GM12878 (cell line): ENCODE measurements at regions of chr9 and their contacts with region 1.

Region 1: DNA sequence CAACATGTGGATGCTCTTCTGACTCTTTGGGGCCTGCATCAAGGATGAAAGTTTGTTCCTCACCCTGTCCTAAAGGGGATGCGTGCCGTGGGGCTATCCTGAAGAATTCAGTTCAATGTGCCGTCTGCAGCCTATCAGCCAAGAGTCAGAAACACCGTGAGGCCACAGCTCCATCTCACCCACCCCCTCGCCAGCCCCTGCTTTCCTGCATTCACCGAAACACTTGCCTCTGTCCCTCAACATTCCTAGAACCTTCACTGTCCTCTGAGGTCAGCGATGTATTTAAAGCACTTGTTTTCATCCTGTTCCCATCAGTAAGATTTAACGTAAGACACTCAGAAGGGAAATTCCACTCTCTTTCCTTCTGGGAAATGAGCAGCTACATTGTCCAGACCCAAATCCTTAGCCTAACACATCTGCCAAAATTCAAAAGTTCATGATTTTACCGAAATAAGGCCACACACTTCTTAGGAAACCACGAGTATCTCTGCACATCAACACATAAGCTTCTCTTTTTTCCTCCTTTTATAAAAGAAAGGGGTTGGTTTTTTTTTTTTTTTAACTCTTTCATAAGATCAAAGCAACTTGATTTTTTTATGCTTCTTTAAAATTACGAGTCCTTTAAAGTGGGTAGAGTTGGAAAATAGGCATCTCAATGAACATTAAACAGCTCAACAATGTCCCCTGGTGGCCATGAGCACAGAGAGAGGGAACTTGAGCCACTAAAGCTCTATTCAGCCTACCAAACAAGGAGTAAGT is 100.7 kb downstream of the SUSD1 start:
- DNase-seq: peak; percentile 84
- ATAC-seq: peak; percentile 72
- H3K4me3 ChIP-seq: peak overlapping the region; percentile 4; the same call in 1 of the 2 replicates
- H3K27ac ChIP-seq: peak overlapping the region; percentile 73
- H3K4me1 ChIP-seq: peaks cover 66% of the 10 kb centered on the region
- H3K27me3 ChIP-seq: no peaks in the 10 kb centered on the region
- CTCF ChIP-seq: peak; percentile 91 to 97 (median 97)
- EP300 ChIP-seq: no peak
- POLR2A ChIP-seq: no peak
- RAD21 ChIP-seq: peak; percentile 99

Region 2: GRCh38 chr9:111896353-111896958 is 178.0 kb before region 1 on chr9 and contains the start of gene UGCG:
- CTCF ChIA-PET with region 1: interaction called, 10 read pairs
- POLR2A ChIA-PET with region 1: interaction called, 8 read pairs
- RAD21 ChIA-PET with region 1: interaction called, 24 read pairs
- SMC1A ChIA-PET with region 1: interaction called, 23 read pairs
- in situ Hi-C with region 1: no loop called
- intact Hi-C with region 1: loop called (anchors 2 kb)
- DNase-seq: no peak
- ATAC-seq: peak; percentile 79
- H3K4me3 ChIP-seq: peak within 1 kb of the TSS; percentile 80
- H3K27ac ChIP-seq: peak within 1 kb of the TSS; percentile 93
- H3K4me1 ChIP-seq: no peaks in the 10 kb centered on the region; the same call in 1 of the 2 replicates
- H3K27me3 ChIP-seq: no peaks in the 10 kb centered on the region
- CTCF ChIP-seq: no peak
- EP300 ChIP-seq: 0 out of 4 replicates have a peak, but pooled peaks of 1 of the 2 experiments have one; percentile 14
- POLR2A ChIP-seq: peak; percentile 93
- RAD21 ChIP-seq: 0 out of 2 replicates have a peak, but pooled peaks have one; percentile 2
- polyA plus RNA-seq, gene UGCG: 48.0 to 62.1 TPM

Region 3: GRCh38 chr9:111937781-111938426 is 136.5 kb before region 1 on chr9:
- CTCF ChIA-PET with region 1: interaction called, 10 read pairs
- POLR2A ChIA-PET with region 1: interaction called, 3 read pairs
- RAD21 ChIA-PET with region 1: interaction called, 26 read pairs
- SMC1A ChIA-PET with region 1: interaction called, 9 read pairs
- in situ Hi-C with region 1: no loop called
- intact Hi-C with region 1: no loop called
- DNase-seq: peak; percentile 74
- ATAC-seq: peak; percentile 90
- H3K4me3 ChIP-seq: no peak overlapping the region
- H3K27ac ChIP-seq: peak overlapping the region; percentile 80
- H3K4me1 ChIP-seq: peaks cover 21% of the 10 kb centered on the region
- H3K27me3 ChIP-seq: no peaks in the 10 kb centered on the region
- CTCF ChIP-seq: no peak
- EP300 ChIP-seq: peak; percentile 68 to 77; a peak in 2 of 4 replicates
- POLR2A ChIP-seq: no peak; the same call in none of the 2 replicates
- RAD21 ChIP-seq: no peak

Region 4: DNA sequence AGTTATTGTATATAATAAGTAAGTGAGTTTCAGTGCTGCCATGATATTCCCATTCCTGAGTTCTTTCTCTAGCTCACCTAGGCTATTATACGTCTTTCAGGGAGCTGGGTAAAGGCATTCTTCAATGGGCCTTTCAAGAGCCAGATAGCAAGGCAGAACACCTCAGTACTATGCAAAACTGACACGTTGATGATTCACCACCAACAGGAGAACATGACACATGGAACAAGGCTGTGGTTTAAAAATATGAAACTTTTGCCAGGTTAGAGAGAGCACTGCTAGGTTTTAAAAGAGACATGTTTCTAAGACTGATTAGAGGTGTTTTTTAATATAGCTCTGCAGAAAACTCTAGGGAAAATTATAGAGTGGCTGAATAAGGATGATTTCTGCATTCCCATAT is 81.9 kb before region 1 on chr9:
- CTCF ChIA-PET with region 1: interaction called, 22 read pairs
- POLR2A ChIA-PET with region 1: interaction called, 9 read pairs
- RAD21 ChIA-PET with region 1: interaction called, 55 read pairs
- SMC1A ChIA-PET with region 1: interaction called, 129 read pairs
- in situ Hi-C with region 1: no loop called
- intact Hi-C with region 1: no loop called
- DNase-seq: peak; percentile 77
- ATAC-seq: peak; percentile 86
- H3K4me3 ChIP-seq: no peak overlapping the region
- H3K27ac ChIP-seq: peak overlapping the region; percentile 89
- H3K4me1 ChIP-seq: peaks cover 54% of the 10 kb centered on the region
- H3K27me3 ChIP-seq: no peaks in the 10 kb centered on the region
- CTCF ChIP-seq: no peak
- EP300 ChIP-seq: peak; percentile 43 to 69; a peak in 3 of 4 replicates
- POLR2A ChIP-seq: no peak
- RAD21 ChIP-seq: no peak

Region 5: DNA sequence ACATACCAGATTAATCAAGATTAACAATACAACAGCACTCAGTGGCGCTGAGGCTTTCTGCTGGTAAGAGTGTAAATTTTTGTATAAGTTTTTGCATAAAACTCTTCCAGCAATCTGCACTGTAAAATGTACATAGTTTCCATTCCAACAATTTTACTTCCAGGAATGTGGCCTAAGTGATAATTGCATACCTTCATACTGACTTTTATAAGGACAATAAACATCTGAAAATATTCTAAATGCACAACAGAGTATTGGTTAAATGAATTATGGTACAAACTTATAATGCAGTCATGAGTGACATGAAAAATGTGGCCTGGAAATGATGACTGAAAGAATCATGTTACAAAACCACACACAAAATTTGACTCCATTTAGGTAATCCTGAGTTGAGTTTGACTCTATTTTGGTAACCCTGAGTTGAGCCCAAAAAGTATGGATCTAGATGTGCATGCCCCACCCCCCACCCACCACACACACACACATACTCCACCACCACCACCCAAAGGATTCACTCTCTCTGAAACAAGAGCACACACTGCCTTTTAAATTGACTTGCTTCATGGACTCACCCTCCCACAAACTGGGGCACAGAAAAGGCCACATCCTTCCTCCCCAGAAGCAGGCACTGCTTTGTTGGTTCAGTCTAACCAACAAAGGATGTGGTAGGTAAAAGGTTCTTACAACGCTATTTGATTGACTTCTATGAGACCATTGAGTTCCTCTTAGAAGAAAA is 37.0 kb before region 1 on chr9:
- CTCF ChIA-PET with region 1: interaction called, 41 read pairs
- POLR2A ChIA-PET with region 1: interaction called, 42 read pairs
- RAD21 ChIA-PET with region 1: interaction called, 339 read pairs
- SMC1A ChIA-PET with region 1: interaction called, 301 read pairs
- in situ Hi-C with region 1: no loop called
- intact Hi-C with region 1: no loop called
- DNase-seq: peak; percentile 97
- ATAC-seq: peak; percentile 71
- H3K4me3 ChIP-seq: no peak overlapping the region
- H3K27ac ChIP-seq: peak overlapping the region; percentile 97
- H3K4me1 ChIP-seq: peaks cover 63% of the 10 kb centered on the region
- H3K27me3 ChIP-seq: no peaks in the 10 kb centered on the region
- CTCF ChIP-seq: no peak
- EP300 ChIP-seq: peak; percentile 74 to 78; a peak in 3 of 4 replicates
- POLR2A ChIP-seq: peak; percentile 69
- RAD21 ChIP-seq: peak; percentile 44; the same call in 1 of the 2 replicates

Region 6: GRCh38 chr9:112097712-112098688 is 23.6 kb after region 1 on chr9:
- CTCF ChIA-PET with region 1: interaction called, 24 read pairs
- POLR2A ChIA-PET with region 1: no interaction called
- RAD21 ChIA-PET with region 1: interaction called, 3 read pairs
- SMC1A ChIA-PET with region 1: interaction called, 9 read pairs
- in situ Hi-C with region 1: no loop called
- intact Hi-C with region 1: no loop called
- DNase-seq: no peak
- ATAC-seq: peak; percentile 93
- H3K4me3 ChIP-seq: no peak overlapping the region
- H3K27ac ChIP-seq: no peak overlapping the region
- H3K4me1 ChIP-seq: peaks cover 5% of the 10 kb centered on the region; the same call in 1 of the 2 replicates
- H3K27me3 ChIP-seq: no peaks in the 10 kb centered on the region
- CTCF ChIP-seq: peak; percentile 86 to 93 (median 88)
- EP300 ChIP-seq: no peak
- POLR2A ChIP-seq: no peak
- RAD21 ChIP-seq: peak; percentile 91

Region 7: DNA sequence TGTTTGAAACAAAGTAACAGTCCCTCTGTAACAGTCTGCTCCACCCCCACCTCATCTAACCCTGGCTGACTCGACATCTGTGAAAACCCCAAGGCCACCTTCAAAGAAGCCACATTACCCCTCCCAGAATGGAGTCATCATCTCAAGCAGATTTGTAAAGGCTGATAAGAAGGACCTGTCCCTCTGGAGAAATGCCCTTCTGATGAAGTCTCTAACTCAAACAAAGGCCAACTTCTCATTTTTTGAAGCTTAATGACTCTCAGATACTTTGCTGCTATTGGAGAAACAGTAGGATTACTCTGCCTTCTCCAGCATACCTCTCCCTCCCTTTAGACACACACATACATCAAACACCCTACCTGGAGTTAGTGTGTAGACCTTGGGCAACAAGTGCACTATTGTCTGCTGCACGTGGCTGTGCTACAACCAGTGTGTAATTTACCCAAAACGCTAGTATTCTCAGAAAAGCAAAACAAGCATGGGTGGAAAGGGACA is 106.0 kb after region 1 on chr9:
- CTCF ChIA-PET with region 1: no interaction called
- POLR2A ChIA-PET with region 1: no interaction called
- RAD21 ChIA-PET with region 1: no interaction called
- SMC1A ChIA-PET with region 1: no interaction called
- in situ Hi-C with region 1: no loop called
- intact Hi-C with region 1: no loop called
- DNase-seq: no peak
- ATAC-seq: peak; percentile 62
- H3K4me3 ChIP-seq: no peak overlapping the region
- H3K27ac ChIP-seq: no peak overlapping the region
- H3K4me1 ChIP-seq: peaks cover 4% of the 10 kb centered on the region; the same call in 1 of the 2 replicates
- H3K27me3 ChIP-seq: no peaks in the 10 kb centered on the region; a peak in 1 of 4 replicates
- CTCF ChIP-seq: no peak
- EP300 ChIP-seq: no peak
- POLR2A ChIP-seq: no peak
- RAD21 ChIP-seq: no peak